ENCODE measurements at regions of chr2 and their contacts with region 1.

Region 1: DNA sequence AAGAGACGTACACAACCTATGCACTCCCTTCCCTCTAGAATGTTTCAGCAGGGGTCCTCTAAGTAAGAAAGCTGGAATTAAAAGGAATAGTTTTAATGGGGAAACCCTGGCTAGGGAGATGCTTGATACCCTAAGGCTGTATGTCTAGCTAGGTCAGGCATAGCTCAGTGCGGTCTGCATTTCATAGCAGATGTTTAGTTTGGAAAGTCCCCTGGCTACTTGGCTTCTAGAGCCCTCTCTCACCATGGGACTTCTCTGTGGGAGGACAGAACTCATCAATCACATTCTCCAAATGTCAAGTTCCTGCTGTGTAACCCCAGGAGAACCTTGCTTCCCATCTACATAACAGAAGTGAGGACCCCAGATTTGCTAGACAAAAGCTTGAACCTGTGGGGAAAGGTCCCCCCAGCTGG is 24.1 kb upstream of the ANXA4 start:
- DNase-seq: no peak
- ATAC-seq: no peak
- H3K4me3 ChIP-seq: no peak overlapping the region
- H3K4me3 Mint-ChIP-seq: no peak overlapping the region
- H3K27ac ChIP-seq: no peak overlapping the region
- H3K27ac Mint-ChIP-seq: no peak overlapping the region
- H3K4me1 ChIP-seq: peaks cover 0 to 6% of the 10 kb centered on the region in 2 donors
- H3K4me1 Mint-ChIP-seq: peaks cover 2% of the 10 kb centered on the region
- H3K27me3 ChIP-seq: peaks cover 0 to 39% (median 11%) of the 10 kb centered on the region in 4 experiments
- H3K27me3 Mint-ChIP-seq: peaks cover 42% of the 10 kb centered on the region
- CTCF ChIP-seq: no peak

Region 2: DNA sequence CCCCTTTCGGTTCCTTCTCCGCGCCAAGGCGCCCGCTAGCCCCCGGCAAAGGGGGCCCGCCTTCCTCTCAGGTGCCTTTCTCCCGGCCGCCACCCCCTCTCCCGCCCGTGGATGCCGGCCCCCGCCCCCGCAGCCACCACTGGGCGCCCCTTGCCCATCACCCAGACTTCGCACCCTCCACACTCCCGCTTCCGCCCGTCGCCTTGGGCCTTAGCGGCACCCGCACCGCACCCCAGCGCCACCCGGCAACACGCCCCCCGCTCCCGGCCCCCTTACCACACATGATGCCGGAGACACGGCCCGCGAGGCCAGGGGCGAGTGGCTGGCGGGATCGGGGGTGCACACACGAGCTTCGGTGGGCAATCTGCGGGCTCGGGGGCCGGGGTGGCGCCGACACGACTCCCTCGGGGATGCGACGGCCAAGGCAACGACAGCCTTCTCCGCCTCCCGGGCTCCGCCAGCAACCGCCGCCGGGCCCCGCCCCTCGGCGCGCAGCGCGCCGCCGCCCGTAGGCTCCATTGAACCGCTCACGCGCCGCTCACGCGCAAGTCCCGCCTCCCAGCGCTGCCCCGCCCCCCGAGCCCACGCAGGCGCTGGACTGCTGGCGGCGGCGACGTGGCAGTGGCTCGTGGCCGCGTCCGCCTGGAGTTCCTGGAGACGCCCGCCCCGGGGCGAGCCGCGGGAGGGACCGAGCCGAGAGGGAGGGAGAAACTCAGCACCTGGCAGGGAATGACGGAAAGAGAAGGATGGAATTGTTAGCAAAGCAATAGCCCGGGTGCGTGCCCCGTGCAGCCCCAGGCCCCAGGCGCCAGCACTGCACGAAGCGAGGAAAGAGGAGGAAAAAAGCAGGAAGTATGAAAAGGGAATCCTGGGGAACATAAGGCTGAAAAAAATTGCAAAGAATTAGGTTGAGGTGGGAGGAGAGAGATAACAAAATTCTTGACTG is 330.8 kb before region 1 on chr2 and contains the start of gene GFPT1:
- CTCF ChIA-PET with region 1: no interaction called
- POLR2A ChIA-PET with region 1: no interaction called
- intact Hi-C with region 1: loop called (anchors 5 kb)
- DNase-seq: peak; percentile 94
- ATAC-seq: peak; percentile 97
- H3K4me3 ChIP-seq: peak within 1 kb of the TSS; percentile 52 to 90 (median 82)
- H3K4me3 Mint-ChIP-seq: peak within 1 kb of the TSS; percentile 90
- H3K27ac ChIP-seq: peak within 1 kb of the TSS; percentile 62 to 70
- H3K27ac Mint-ChIP-seq: peak within 1 kb of the TSS; percentile 85
- H3K4me1 ChIP-seq: peaks cover 15 to 16% of the 10 kb centered on the region in 2 donors
- H3K4me1 Mint-ChIP-seq: peaks cover 30% of the 10 kb centered on the region
- H3K27me3 ChIP-seq: no peaks in the 10 kb centered on the region
- H3K27me3 Mint-ChIP-seq: no peaks in the 10 kb centered on the region
- CTCF ChIP-seq: no peak
- total RNA-seq, gene GFPT1: 15.0 and 18.1 TPM in 2 replicates

Region 3: DNA sequence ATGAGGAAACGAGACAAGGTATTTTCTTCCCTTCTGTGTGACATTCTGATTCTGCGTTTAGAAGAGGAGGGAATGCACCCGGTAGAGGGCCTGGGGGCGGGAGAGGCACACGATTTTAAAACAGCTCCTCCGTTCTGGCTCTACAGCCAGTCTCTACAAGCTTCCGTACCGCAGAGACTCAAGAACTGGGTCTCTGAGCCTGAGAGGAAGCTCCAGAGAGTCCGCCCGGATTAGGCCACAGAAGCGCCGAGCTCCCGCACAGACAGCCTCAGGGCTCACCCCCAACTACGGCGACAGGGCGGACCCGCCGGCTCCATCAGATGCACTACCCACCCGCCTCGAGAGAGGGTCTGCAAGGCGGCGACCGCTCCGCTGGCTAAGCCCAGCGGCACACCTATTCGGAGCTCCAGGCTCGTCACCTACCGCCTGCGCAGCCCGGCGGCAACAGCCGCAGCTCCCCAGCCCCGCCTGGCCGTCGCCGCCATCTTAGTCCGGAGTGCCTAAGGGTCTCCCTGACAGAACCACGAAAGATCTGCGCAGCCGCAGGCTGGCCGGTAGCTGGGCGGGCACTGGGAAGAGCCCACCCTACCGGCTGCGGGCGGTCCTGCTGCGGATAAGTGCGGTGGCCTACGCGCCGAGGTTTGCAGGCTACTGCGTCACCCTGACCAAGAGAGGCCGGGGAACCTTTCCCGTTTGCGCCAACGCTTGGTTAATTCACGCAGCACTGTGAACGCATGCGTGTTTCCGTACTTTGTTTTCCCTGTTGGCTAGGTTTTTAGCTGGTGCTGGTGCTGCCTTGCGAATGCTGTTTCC is 280.7 kb before region 1 on chr2 and contains the start of gene NFU1:
- CTCF ChIA-PET with region 1: interaction called, 6 read pairs
- POLR2A ChIA-PET with region 1: no interaction called
- intact Hi-C with region 1: loop called (anchors 10 kb)
- DNase-seq: peak; percentile 94
- ATAC-seq: peak; percentile 94
- H3K4me3 ChIP-seq: peak within 1 kb of the TSS; percentile 67 to 92 (median 78)
- H3K4me3 Mint-ChIP-seq: peak within 1 kb of the TSS; percentile 97
- H3K27ac ChIP-seq: peak within 1 kb of the TSS; percentile 91 to 93
- H3K27ac Mint-ChIP-seq: peak within 1 kb of the TSS; percentile 99
- H3K4me1 ChIP-seq: peaks cover 27 to 33% of the 10 kb centered on the region in 2 donors
- H3K4me1 Mint-ChIP-seq: peaks cover 41% of the 10 kb centered on the region
- H3K27me3 ChIP-seq: no peaks in the 10 kb centered on the region
- H3K27me3 Mint-ChIP-seq: no peaks in the 10 kb centered on the region
- CTCF ChIP-seq: peak; percentile 74
- total RNA-seq, gene NFU1: 33.8 and 40.6 TPM in 2 replicates

Region 4: DNA sequence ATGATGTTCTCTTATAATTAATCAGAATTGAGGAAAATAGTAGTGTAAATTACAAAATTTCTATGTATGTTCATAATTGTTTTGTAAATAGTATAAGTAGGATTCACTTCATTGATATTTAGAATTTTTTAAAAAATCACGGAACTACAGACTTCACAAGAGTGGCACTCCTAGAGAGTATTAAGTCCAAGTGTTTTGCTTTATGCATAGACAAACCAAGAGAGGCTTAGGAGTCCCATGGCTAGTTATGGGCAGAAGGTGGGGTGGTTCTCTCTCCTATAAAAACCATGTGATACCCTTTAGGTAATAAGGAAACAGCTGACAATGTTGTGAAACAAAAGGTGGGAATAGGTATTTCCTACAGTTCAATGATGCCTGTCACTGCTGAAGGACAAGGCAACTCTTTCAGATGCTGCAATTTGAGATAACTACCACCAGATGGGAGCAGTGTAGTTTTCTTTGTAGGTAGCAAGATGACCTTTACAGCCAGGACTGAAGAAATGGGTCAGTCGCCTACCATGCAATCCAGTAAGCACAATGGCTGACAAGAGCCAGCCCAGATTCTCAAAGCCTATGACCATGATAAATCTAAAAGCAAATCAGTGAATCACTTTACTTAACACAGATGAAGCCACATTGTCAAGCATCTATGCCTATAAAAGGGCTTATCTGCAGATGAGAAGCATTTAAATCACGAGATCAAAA is 158.3 kb before region 1 on chr2:
- CTCF ChIA-PET with region 1: interaction called, 28 read pairs
- POLR2A ChIA-PET with region 1: no interaction called
- intact Hi-C with region 1: loop called (anchors 1 kb)
- DNase-seq: peak; percentile 51
- ATAC-seq: peak; percentile 62
- H3K4me3 ChIP-seq: no peak overlapping the region
- H3K4me3 Mint-ChIP-seq: no peak overlapping the region
- H3K27ac ChIP-seq: no peak overlapping the region
- H3K27ac Mint-ChIP-seq: no peak overlapping the region
- H3K4me1 ChIP-seq: peaks cover 0 to 4% of the 10 kb centered on the region in 2 donors
- H3K4me1 Mint-ChIP-seq: peaks cover 4% of the 10 kb centered on the region
- H3K27me3 ChIP-seq: peaks cover 0 to 5% (median 0%) of the 10 kb centered on the region in 4 experiments
- H3K27me3 Mint-ChIP-seq: peaks cover 21% of the 10 kb centered on the region
- CTCF ChIP-seq: peak; percentile 55

Region 5: GRCh38 chr2:69848201-69848770 is 130.4 kb after region 1 on chr2:
- CTCF ChIA-PET with region 1: no interaction called
- POLR2A ChIA-PET with region 1: no interaction called
- intact Hi-C with region 1: no loop called
- DNase-seq: no peak
- ATAC-seq: no peak
- H3K4me3 ChIP-seq: no peak overlapping the region
- H3K4me3 Mint-ChIP-seq: no peak overlapping the region
- H3K27ac ChIP-seq: no peak overlapping the region
- H3K27ac Mint-ChIP-seq: no peak overlapping the region
- H3K4me1 ChIP-seq: no peaks in the 10 kb centered on the region
- H3K4me1 Mint-ChIP-seq: no peaks in the 10 kb centered on the region
- H3K27me3 ChIP-seq: no peaks in the 10 kb centered on the region
- H3K27me3 Mint-ChIP-seq: no peaks in the 10 kb centered on the region
- CTCF ChIP-seq: no peak